Sigmoid colon (tissue), 7 donors: ENCODE measurements at regions of chr1 and their contacts with region 1.

Region 1: GRCh38 chr1:59296358-59297256 is at the start of gene FGGY:
- DNase-seq: peak; percentile 99
- H3K4me3 ChIP-seq: peak within 1 kb of the TSS; percentile 45 to 61 (median 50)
- H3K27ac ChIP-seq: peak within 1 kb of the TSS; percentile 90 to 98 (median 94)
- H3K4me1 ChIP-seq: peaks cover 0 to 20% (median 15%) of the 10 kb centered on the region in 4 donors
- H3K27me3 ChIP-seq: no peaks in the 10 kb centered on the region
- CTCF ChIP-seq: no peak
- EP300 ChIP-seq: peak in 2 of 4 donors; percentile 40 to 63
- POLR2A ChIP-seq: peak; percentile 91
- total RNA-seq, gene FGGY: 20.5 to 54.1 (median 33.9) TPM

Region 2: GRCh38 chr1:58893257-58893869 is 403.2 kb before region 1 on chr1:
- intact Hi-C with region 1: no loop called
- DNase-seq: no peak
- H3K4me3 ChIP-seq: no peak overlapping the region
- H3K27ac ChIP-seq: no peak overlapping the region
- H3K4me1 ChIP-seq: peaks cover 0 to 30% (median 18%) of the 10 kb centered on the region in 4 donors
- H3K27me3 ChIP-seq: no peaks in the 10 kb centered on the region
- CTCF ChIP-seq: no peak
- EP300 ChIP-seq: no peak
- POLR2A ChIP-seq: no peak

Region 3: GRCh38 chr1:58903514-58904298 is 392.9 kb before region 1 on chr1:
- intact Hi-C with region 1: loop called (anchors 2 kb)
- DNase-seq: peak; percentile 98
- H3K4me3 ChIP-seq: peak overlapping the region; percentile 38 to 56 (median 53)
- H3K27ac ChIP-seq: peak overlapping the region; percentile 93 to 96 (median 96)
- H3K4me1 ChIP-seq: peaks cover 0 to 46% (median 26%) of the 10 kb centered on the region in 4 donors
- H3K27me3 ChIP-seq: no peaks in the 10 kb centered on the region
- CTCF ChIP-seq: no peak
- EP300 ChIP-seq: peak in 3 of 4 donors; percentile 42 to 84 (median 72)
- POLR2A ChIP-seq: peak; percentile 85 to 88

Region 4: GRCh38 chr1:59393211-59394180 is 96.9 kb after region 1 on chr1:
- intact Hi-C with region 1: loop called (anchors 5 kb)
- DNase-seq: peak; percentile 95
- H3K4me3 ChIP-seq: no peak overlapping the region
- H3K27ac ChIP-seq: peak overlapping the region; percentile 78 to 88 (median 88)
- H3K4me1 ChIP-seq: peaks cover 0 to 37% (median 30%) of the 10 kb centered on the region in 4 donors
- H3K27me3 ChIP-seq: no peaks in the 10 kb centered on the region
- CTCF ChIP-seq: no peak
- EP300 ChIP-seq: peak in 3 of 4 donors; percentile 14 to 36 (median 16)
- POLR2A ChIP-seq: no peak

Region 5: GRCh38 chr1:59511476-59512465 is 215.2 kb after region 1 on chr1:
- intact Hi-C with region 1: loop called (anchors 5 kb)
- DNase-seq: no peak
- H3K4me3 ChIP-seq: no peak overlapping the region
- H3K27ac ChIP-seq: peak overlapping the region in 3 of 4 donors; percentile 30 to 41 (median 31)
- H3K4me1 ChIP-seq: peaks cover 0 to 72% (median 66%) of the 10 kb centered on the region in 4 donors
- H3K27me3 ChIP-seq: no peaks in the 10 kb centered on the region
- CTCF ChIP-seq: no peak
- EP300 ChIP-seq: no peak
- POLR2A ChIP-seq: no peak

Region 6: DNA sequence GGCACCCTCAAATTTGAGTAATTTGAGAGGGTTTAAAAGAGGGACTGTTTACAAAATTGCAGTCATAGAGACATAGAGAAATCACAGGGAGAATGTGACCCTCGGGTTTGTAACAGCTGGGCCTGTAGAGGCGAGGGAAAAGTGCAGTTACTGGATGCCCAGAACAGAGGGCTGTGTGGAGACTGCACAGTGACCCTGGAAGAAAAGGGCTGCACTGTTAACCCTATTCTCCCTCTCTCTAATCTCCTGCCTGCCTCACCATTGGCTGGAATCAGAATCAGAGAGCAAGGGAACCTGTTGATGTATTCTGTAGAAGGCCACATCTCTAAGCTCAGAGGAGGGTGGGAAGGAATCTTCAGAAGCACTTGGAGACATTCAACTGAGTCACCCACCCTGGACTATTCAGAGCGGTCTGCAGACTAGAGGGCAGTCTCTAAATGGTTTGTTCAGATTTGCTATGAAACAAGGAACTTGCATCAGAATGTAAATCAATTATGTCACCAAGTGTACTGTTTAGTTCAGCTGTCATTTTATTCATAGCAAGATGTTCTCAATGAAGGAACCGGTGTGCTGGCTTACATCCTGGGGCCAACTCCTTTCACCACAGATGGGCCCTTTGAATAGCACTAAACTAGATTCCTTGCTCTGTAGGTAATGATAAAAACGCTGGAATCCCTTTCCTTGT is 385.9 kb after region 1 on chr1:
- intact Hi-C with region 1: loop called (anchors 5 kb)
- DNase-seq: peak; percentile 77
- H3K4me3 ChIP-seq: no peak overlapping the region
- H3K27ac ChIP-seq: peak overlapping the region; percentile 73 to 83 (median 79)
- H3K4me1 ChIP-seq: peaks cover 0 to 62% (median 33%) of the 10 kb centered on the region in 4 donors
- H3K27me3 ChIP-seq: no peaks in the 10 kb centered on the region
- CTCF ChIP-seq: no peak
- EP300 ChIP-seq: peak; percentile 41 to 91 (median 71)
- POLR2A ChIP-seq: no peak

Region 7: DNA sequence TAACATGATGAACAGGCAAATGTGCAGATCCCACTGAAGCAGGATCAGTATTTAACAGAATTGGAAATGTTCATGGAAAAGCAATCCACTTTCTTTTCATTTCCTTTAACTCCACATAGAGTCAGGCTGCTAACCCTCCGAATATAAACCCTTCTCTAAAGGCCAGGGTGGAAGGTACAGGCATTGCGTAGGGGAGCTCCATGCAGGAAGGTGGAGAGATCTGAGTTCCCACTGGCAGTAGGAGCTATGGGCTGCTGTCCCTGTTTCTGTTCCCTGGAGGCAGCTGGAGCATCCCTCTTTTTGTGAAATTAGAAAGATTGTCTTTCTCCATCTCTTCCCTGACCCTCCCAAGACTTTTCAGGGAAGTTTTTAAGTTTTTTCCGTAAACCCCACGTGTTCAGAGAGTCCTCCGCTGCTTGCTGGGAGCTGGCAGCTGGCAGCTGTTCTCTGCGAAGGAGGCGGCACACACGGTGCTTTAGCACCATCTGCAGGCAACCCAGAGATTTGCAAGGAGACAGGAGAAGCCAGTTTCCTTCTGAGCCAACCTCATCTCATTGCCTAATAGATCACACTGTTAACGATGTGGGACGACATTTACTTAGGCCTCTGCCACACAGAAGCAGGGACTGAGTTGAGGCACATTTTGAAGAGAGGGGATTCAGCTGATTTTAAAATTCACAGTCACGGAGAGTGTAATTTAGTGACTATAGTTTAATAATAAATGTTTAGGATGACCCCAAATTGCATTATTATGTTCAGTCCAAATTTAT is 462.7 kb after region 1 on chr1:
- intact Hi-C with region 1: loop called (anchors 5 kb)
- DNase-seq: peak; percentile 94
- H3K4me3 ChIP-seq: peak overlapping the region in 3 of 4 donors; percentile 23 to 34 (median 29)
- H3K27ac ChIP-seq: peak overlapping the region; percentile 36 to 76 (median 72)
- H3K4me1 ChIP-seq: peaks cover 0 to 33% (median 15%) of the 10 kb centered on the region in 4 donors
- H3K27me3 ChIP-seq: no peaks in the 10 kb centered on the region
- CTCF ChIP-seq: peak; percentile 92 to 98 (median 96)
- EP300 ChIP-seq: no peak
- POLR2A ChIP-seq: no peak